Ascending aorta (tissue), 2 donors: ENCODE measurements at regions of chr1 and their contacts with region 1.

Region 1: DNA sequence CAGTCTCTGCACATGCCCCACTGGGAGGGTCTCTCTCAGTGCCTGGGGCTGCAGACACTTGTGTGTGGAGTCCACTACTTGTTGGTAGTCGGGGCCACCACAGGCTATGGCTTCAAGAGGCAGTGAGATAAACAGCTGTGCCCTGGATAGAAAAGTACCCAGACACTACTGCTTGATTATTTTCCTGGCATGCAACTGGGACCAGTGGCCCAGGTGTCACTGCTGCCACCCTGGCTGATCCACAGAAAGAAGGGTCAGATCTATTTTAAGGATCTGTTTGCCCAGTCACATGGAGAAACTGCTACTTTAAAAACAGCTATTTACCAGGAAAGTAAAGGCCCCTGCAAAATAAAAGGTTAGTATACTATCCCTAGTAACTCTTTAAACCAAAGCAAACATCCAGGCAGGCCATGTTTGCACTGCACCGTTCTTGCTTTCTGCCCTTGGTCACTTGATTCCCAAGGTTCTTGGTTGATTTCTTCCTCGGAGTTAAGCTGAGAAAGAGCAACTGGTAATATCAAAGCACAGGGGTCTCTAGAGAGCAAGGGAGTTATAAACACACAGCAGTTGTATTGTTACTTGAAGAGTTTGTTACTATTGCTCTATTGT is 99.9 kb downstream of the GLUL start:
- DNase-seq: no peak
- H3K4me3 ChIP-seq: no peak overlapping the region
- H3K27ac ChIP-seq: no peak overlapping the region
- H3K4me1 ChIP-seq: peaks cover 0 to 21% of the 10 kb centered on the region in 2 donors
- H3K27me3 ChIP-seq: no peaks in the 10 kb centered on the region
- CTCF ChIP-seq: no peak

Region 2: GRCh38 chr1:182143154-182143657 is 148.5 kb before region 1 on chr1:
- intact Hi-C with region 1: loop called (anchors 5 kb)
- DNase-seq: peak; percentile 69 to 96
- H3K4me3 ChIP-seq: no peak overlapping the region
- H3K27ac ChIP-seq: peak overlapping the region; percentile 79 to 91
- H3K4me1 ChIP-seq: peaks cover 5 to 27% of the 10 kb centered on the region in 2 donors
- H3K27me3 ChIP-seq: no peaks in the 10 kb centered on the region
- CTCF ChIP-seq: peak; percentile 81 to 94 (median 87)

Region 3: GRCh38 chr1:182198049-182198501 is 93.6 kb before region 1 on chr1:
- intact Hi-C with region 1: loop called (anchors 5 kb)
- DNase-seq: no peak
- H3K4me3 ChIP-seq: no peak overlapping the region
- H3K27ac ChIP-seq: peak overlapping the region; percentile 48 to 56
- H3K4me1 ChIP-seq: peaks cover 8 to 12% of the 10 kb centered on the region in 2 donors
- H3K27me3 ChIP-seq: no peaks in the 10 kb centered on the region
- CTCF ChIP-seq: peak in 1 of 3 experiments; percentile 16

Region 4: DNA sequence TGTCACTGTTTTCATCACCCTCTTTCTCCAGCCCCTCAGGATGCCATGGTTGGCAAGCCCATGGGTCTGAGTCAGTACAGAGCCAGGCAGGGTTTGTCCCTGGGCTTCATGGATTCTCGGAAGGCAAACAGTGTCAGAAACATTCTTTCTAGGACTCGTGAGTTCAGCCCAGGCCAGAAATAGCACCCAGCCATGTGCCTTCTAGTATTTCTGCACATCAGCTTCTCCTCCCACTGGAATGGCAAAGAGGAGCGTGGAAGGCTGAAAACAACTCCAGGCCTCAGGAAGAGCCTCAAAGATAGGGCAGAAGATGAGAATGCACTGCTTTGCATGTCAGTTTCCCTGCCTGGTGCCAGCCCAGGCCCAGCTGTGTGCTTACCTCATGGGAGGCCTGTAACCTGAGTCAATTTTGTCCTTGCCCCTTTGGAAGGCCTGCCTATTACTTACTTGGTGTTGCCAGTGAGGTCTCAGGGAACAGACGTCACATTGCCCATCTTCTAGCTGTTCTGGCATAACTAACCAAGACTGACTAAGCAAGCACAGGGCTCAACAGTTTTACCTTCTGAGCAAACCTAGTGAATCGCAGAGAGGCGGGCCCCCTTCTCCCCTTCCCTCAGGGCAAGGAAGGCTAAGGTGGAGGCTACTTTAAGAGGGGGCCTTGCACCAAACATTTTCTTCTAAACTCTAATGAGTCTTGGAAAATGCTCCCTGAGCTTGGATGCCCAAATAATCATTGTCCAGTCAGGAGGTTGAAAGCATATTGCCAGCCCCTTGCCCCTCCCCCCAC is 57.5 kb after region 1 on chr1:
- intact Hi-C with region 1: loop called (anchors 5 kb)
- DNase-seq: peak; percentile 54 to 83
- H3K4me3 ChIP-seq: no peak overlapping the region
- H3K27ac ChIP-seq: peak overlapping the region; percentile 50 to 62
- H3K4me1 ChIP-seq: peaks cover 4 to 9% of the 10 kb centered on the region in 2 donors
- H3K27me3 ChIP-seq: no peaks in the 10 kb centered on the region
- CTCF ChIP-seq: no peak

Region 5: DNA sequence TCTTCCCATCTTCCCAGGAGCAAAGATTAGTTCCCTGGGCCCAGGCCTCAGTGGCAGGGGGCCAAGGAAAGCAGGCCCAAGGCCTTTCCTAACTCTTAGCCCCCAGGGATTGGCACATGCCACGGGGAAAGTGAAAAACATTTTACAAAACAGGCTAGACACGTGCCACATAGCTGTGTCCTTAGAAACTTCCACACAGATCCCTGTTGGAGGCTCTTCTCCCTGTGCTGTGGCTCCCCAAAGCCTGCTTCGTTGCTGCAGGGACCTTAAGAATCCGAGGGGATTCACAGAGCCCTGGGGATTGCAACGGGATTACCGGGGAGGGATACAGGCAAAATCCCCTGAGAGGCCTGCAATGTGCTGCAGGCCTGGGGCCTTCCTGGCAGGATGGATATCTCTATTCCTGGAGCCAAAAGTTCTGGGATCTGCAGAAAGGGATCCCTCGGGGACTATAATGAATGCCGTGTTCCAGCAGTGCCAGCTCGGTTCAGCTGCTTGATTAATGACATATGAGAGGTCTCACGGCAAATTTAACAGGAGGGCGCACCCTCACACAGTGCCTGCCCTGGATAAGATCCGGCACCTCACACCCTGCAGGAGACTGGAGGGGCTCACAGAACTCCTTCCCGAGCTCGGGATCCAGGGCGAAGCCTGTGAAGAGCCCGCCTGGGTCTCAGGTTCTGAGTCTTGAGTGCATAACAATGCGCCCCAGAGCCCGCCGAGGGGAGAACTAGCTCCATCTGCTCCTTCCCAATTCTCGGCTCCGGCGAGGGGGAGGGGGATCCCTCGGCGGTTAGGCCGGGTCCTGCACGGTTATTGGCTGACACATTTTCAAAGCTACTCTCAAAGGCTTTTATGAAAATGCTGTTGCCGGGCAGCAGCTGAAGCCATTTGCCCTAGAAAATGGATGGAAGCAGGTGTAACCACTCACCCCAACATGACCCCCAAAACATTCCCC is 408.0 kb after region 1 on chr1:
- intact Hi-C with region 1: no loop called
- DNase-seq: peak in 1 of 2 donors; percentile 72
- H3K4me3 ChIP-seq: peak overlapping the region in 1 of 2 donors; percentile 28
- H3K27ac ChIP-seq: peak overlapping the region; percentile 6 to 16
- H3K4me1 ChIP-seq: peaks cover 6 to 35% of the 10 kb centered on the region in 2 donors
- H3K27me3 ChIP-seq: no peaks in the 10 kb centered on the region
- CTCF ChIP-seq: no peak